Left colon (tissue), 2 donors: ENCODE measurements at regions of chr4 and their contacts with region 1.

Region 1: DNA sequence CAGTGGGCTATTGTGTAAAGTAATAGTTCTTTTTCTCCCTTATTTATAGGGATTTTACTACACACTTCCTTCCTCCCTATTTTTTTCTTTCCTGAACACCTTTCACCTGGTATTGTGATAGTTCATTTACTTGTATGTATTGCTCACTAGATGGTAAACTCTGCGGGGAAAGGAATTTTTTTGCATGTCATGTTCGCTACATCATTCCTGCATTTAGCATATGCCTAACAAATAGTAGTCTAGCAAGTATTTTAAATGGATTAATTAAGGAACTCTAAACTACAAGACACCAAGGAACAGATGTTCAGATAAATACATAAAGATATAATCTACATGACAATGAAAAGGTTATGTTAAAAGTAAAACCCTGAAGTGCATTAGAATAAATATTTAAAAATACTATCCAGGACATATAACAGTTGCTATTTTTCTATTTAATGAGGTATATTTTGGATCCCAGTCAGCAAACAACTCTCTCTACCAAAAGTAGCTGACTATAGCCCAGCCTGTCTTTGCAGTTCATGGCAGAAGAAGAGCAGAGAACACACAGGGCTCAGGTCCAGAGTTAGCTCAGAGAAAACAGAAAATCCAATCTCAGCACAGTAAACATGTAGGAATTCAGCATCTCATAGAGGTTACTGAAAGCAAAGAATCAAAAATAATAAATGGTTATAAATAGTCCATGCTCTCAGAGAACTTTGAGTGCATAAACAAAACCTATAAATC is 87.8 kb downstream of the PACRGL start:
- DNase-seq: no peak
- ATAC-seq: no peak

Region 2: GRCh38 chr4:21001490-21001889 is 213.4 kb after region 1 on chr4:
- intact Hi-C with region 1: no loop called
- DNase-seq: no peak
- ATAC-seq: peak; percentile 64

Region 3: DNA sequence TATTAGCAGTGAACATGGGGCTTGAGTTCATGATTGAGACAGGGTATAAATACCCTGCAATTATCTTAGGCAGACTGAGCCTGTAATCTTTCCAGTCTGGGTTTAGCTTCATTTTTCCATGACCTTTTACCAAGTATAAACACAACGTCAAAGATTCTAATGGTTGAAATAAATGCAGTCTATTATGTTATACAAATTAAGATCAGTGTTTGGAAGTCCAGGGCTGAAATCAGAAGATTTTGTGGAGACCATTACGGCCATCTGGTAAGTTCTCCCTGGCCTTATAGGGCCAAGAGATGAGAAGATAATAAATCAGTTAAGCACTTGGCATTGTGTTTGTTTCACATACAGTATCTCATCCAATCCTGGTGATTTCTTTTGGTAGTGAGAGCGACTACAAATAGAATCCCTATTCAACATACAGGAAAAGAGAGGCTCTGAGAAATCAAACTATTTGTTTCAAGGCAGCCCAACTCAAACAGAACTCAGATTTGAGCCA is 338.0 kb after region 1 on chr4:
- intact Hi-C with region 1: loop called in 1 of 2 experiments (anchors 5 kb)
- DNase-seq: no peak
- ATAC-seq: no peak

Region 4: DNA sequence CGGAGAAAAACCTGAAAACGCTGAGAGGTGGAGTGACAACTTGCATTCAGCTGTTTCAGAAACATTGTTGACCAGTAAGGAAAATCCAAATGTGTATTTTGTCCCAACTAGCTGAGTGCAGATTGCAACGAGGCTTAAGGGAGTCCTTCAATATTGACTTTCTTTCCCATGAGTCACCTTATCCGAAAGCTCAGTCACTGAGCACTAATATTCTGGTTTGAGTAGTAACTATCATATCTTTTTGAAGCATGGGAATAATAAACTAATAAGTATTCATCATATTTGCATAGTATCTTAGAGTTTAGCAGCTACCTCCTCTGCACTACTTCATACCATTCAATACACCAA is 516.4 kb after region 1 on chr4:
- intact Hi-C with region 1: no loop called
- DNase-seq: no peak
- ATAC-seq: no peak